Left ventricle myocardium inferior (tissue), 1 donor: ENCODE measurements at regions of chr5 and their contacts with region 1.

Region 1: GRCh38 chr5:34459908-34460307 is 196.2 kb upstream of the RAI14 start:
- DNase-seq: no peak
- H3K4me3 ChIP-seq: no peak overlapping the region
- H3K27ac ChIP-seq: no peak overlapping the region
- H3K4me1 ChIP-seq: no peaks in the 10 kb centered on the region
- H3K27me3 ChIP-seq: peaks cover 5% of the 10 kb centered on the region
- CTCF ChIP-seq: no peak

Region 2: GRCh38 chr5:33997331-33997983 is 462.5 kb before region 1 on chr5:
- intact Hi-C with region 1: loop called (anchors 10 kb)
- DNase-seq: no peak
- H3K4me3 ChIP-seq: no peak overlapping the region
- H3K27ac ChIP-seq: no peak overlapping the region
- H3K4me1 ChIP-seq: peaks cover 8% of the 10 kb centered on the region
- H3K27me3 ChIP-seq: no peaks in the 10 kb centered on the region
- CTCF ChIP-seq: peak; percentile 75

Region 3: GRCh38 chr5:34811706-34812105 is 351.8 kb after region 1 on chr5:
- intact Hi-C with region 1: no loop called
- DNase-seq: no peak
- H3K4me3 ChIP-seq: no peak overlapping the region
- H3K27ac ChIP-seq: no peak overlapping the region
- H3K4me1 ChIP-seq: no peaks in the 10 kb centered on the region
- H3K27me3 ChIP-seq: no peaks in the 10 kb centered on the region
- CTCF ChIP-seq: no peak